PC-9 (cell line): ENCODE measurements at regions of chr7 and their contacts with region 1.

Region 1: DNA sequence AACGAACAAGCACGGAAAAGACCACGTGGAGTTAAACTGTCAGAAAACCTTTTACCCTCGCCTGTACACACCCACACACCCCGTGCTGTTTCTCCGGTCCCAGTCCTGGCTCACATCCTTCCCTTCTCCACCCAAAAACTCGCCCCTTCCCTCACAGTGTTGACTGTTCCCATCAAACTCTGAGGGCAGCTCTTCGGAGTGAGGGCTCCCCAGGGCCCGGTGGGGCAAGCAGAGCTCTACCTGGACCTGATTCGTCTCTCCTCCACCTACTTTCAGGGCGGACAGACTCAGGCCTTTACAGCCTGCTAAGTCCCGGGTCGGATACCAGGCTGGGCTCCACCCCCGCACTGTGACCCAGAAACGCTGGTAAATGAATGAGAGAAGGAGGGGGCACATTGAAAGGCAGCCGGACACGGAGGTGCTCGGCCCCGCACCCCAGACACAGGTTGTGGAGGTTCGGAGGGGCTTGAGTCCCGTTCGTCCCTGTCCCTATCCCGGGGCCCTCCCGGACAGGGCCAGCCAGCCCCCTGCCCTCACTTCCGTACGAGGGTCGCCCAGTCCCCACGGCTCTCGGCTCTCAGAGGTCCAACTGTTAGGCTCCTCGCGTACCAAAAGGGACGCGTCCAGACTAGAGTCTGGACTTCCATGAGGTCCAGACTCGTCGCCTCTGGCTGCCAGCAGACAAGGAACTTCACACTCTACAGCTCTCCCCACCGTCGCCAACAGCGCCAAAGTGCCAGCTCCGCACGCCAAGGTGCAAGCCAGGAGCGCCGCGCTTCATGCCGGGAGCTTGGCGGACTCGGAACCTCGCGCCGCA is 31.7 kb upstream of the ASL start:
- DNase-seq: peak in 1 of 2 experiments; percentile 73
- H3K4me3 ChIP-seq: peak overlapping the region; percentile 47; the same call in 1 of the 2 replicates
- H3K27ac ChIP-seq: no peak overlapping the region
- H3K4me1 ChIP-seq: peaks cover 13% of the 10 kb centered on the region
- H3K27me3 ChIP-seq: no peaks in the 10 kb centered on the region
- CTCF ChIP-seq: no peak

Region 2: GRCh38 chr7:66088861-66089838 is 45.3 kb after region 1 on chr7:
- CTCF ChIA-PET with region 1: no interaction called
- POLR2A ChIA-PET with region 1: interaction called, 23 read pairs
- intact Hi-C with region 1: no loop called
- DNase-seq: no peak
- H3K4me3 ChIP-seq: no peak overlapping the region
- H3K27ac ChIP-seq: no peak overlapping the region
- H3K4me1 ChIP-seq: no peaks in the 10 kb centered on the region
- H3K27me3 ChIP-seq: no peaks in the 10 kb centered on the region
- CTCF ChIP-seq: no peak

Region 3: DNA sequence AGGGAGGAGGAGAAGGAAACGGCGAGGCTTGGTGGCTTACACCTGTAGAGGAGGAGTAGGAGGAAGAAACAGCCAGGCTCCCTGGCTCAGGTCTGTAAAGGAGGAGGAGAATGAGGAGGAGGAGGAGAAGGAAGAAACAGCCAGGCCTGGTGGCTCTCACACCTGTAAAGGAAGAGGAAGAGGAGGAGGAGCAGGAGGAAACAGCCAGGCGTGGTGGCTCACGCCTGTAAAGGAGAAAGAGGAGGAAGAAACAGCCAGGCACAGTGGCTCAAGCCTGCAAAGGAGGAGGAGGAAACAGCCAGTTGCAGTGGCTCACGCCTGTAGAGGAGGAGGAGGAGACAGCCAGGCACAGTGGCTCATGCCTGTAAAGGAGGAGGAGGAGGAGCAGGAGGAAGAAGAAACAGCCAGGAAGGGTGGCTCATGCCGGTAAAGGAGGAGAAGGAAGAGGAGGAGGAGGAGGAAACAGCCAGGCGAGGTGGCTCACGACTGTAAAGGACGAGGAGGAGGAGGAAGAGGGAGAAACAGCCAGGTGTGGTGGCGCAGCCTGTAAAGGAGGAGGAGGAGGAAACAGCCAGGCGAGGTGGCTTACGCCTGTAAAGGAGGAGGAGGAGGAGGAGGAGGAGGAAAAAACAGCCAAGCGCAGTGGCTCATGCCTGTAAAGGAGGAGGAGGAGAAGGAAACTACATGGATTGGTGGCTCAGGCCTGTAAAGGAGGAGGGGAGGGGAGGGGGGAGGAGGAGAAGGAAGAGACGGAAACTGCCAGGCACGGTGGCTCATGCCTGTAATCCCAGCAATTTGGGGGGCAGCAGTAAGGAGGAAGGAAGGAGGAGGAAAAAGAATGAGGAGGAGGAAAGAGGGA is 56.0 kb after region 1 on chr7:
- CTCF ChIA-PET with region 1: no interaction called
- POLR2A ChIA-PET with region 1: no interaction called
- intact Hi-C with region 1: no loop called
- DNase-seq: peak; percentile 85 to 89
- H3K4me3 ChIP-seq: peak overlapping the region; percentile 49; the same call in 1 of the 2 replicates
- H3K27ac ChIP-seq: peak overlapping the region; percentile 66
- H3K4me1 ChIP-seq: peaks cover 10% of the 10 kb centered on the region
- H3K27me3 ChIP-seq: no peaks in the 10 kb centered on the region
- CTCF ChIP-seq: no peak

Region 4: DNA sequence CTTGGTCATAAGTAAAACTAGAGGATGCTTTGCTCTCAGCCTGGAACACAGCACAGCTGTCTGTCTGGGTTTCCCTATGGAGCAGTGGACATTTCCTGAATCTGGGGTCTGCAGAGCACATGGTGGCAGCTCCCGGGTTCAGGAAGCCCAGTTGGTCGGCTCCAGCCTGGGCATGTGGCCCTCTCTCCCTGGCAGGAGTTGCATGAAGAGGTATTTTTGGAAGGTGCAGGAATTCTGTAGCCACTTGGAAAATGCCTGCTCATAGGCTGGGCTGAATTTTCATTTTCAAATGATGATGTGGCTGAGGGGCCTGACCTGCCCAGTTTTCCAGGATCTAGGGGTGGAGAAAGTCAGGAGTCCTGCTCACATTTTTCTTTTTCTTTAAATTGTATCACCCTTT is 154.6 kb after region 1 on chr7:
- CTCF ChIA-PET with region 1: no interaction called
- POLR2A ChIA-PET with region 1: no interaction called
- intact Hi-C with region 1: no loop called
- DNase-seq: no peak
- H3K4me3 ChIP-seq: no peak overlapping the region
- H3K27ac ChIP-seq: no peak overlapping the region
- H3K4me1 ChIP-seq: no peaks in the 10 kb centered on the region
- H3K27me3 ChIP-seq: no peaks in the 10 kb centered on the region
- CTCF ChIP-seq: no peak

Region 5: GRCh38 chr7:66296001-66296521 is 252.2 kb after region 1 on chr7:
- CTCF ChIA-PET with region 1: no interaction called
- POLR2A ChIA-PET with region 1: no interaction called
- intact Hi-C with region 1: no loop called
- DNase-seq: no peak
- H3K4me3 ChIP-seq: no peak overlapping the region
- H3K27ac ChIP-seq: no peak overlapping the region
- H3K4me1 ChIP-seq: no peaks in the 10 kb centered on the region
- H3K27me3 ChIP-seq: no peaks in the 10 kb centered on the region
- CTCF ChIP-seq: no peak

Region 6: DNA sequence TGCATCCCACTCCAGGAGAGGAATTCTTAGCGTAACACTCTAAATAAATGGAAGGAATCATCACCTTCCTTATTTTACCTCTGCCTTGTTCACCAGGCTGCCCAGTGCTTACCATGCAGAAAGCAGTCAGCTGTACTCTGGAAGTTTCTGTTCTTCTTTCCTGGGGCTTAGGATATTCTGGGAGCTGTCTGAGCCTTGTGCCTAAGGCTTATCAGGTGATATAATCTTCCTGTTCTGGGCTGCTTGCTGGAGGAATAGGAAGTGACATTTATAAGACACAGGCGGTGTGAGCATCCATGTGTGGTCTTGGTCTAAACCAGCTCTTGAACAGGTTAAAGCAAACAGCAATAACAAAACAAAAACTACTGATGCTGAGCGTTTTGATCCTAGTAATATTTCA is 598.3 kb after region 1 on chr7:
- CTCF ChIA-PET with region 1: no interaction called
- POLR2A ChIA-PET with region 1: interaction called, 11 read pairs
- intact Hi-C with region 1: no loop called
- DNase-seq: no peak
- H3K4me3 ChIP-seq: no peak overlapping the region
- H3K27ac ChIP-seq: no peak overlapping the region
- H3K4me1 ChIP-seq: no peaks in the 10 kb centered on the region
- H3K27me3 ChIP-seq: no peaks in the 10 kb centered on the region
- CTCF ChIP-seq: no peak